ENCODE measurements at regions of chr6 and their contacts with region 1.

Region 1: DNA sequence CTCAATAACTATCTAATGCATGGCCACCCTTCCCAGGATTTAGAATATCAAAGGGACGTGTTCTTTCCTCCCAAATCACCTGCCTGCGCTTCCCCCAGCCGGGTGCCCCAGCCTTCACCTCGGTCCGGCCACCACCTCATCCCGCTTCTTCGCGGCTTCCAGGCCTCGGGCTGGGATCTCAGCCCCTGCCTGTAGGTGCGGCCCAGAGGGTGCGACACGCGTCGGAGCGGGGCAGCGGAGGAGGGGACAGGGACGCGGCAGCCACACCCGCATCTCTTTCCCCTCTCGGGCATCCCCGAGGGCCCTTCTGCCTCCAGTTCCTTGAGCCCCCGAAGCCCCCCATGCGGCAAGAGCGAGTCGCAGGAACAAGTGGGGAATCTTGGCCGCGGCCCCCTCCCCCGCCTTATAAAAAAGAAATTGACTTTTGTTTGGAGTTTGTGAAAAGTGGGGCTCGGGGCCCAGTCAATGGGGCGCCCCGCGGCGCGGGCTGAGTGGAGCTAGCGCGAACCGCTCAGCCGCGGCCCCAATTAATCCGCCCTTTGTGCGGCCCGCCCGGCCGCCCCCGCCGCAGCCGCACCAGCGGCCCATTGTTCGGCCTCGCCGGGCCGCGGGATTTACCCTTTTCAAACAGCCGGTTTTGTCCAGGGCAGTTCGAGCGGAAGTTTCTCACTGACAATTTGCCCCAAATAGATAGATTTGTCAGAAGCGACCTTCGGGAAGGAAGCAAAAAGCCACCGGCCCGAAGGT is 8.4 kb upstream of the NR2E1 start:
- DNase-seq: no peak
- H3K4me3 Mint-ChIP-seq: no peak overlapping the region
- H3K27ac Mint-ChIP-seq: peak overlapping the region; percentile 52
- H3K4me1 Mint-ChIP-seq: peaks cover 5% of the 10 kb centered on the region
- H3K27me3 Mint-ChIP-seq: peaks cover 90% of the 10 kb centered on the region

Region 2: DNA sequence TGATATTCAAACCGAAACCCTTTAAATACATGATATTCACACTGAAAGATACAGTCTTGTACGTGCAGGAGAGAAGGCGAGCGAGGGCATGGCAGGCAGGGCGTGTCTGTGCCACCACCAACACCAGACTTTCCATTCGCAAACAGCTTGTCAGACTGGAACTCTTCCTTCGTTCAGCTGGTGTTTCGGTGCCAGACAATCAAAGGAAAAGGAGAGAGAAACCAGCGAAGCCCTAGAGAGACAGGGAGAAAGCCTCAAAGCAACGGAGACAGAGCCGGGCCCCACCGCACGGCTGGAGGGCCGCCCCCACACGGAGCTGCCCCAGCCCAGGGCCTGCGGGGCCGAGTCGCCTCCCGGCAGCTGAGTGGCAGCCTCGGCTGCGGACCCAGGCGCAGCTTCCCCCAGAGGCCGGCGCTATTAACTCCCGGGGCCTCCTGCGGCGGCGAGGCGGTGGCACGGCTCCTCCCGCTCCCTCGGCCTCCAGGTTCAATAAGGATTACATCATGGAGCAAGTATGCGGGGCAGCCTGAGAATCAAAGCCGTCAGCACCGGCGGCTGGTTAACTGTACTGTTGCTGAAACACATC is 23.7 kb before region 1 on chr6:
- intact Hi-C with region 1: loop called (anchors 2 kb)
- DNase-seq: no peak
- H3K4me3 Mint-ChIP-seq: peak overlapping the region; percentile 77
- H3K27ac Mint-ChIP-seq: no peak overlapping the region
- H3K4me1 Mint-ChIP-seq: peaks cover 10% of the 10 kb centered on the region
- H3K27me3 Mint-ChIP-seq: peaks cover 79% of the 10 kb centered on the region

Region 3: GRCh38 chr6:108168501-108169463 is 11.4 kb after region 1 on chr6:
- intact Hi-C with region 1: loop called (anchors 2 kb)
- DNase-seq: no peak
- H3K4me3 Mint-ChIP-seq: no peak overlapping the region
- H3K27ac Mint-ChIP-seq: peak overlapping the region; percentile 40
- H3K4me1 Mint-ChIP-seq: peaks cover 14% of the 10 kb centered on the region
- H3K27me3 Mint-ChIP-seq: peaks cover 85% of the 10 kb centered on the region

Region 4: GRCh38 chr6:109373762-109374161 is 1216.4 kb after region 1 on chr6:
- intact Hi-C with region 1: no loop called
- DNase-seq: peak; percentile 46
- H3K4me3 Mint-ChIP-seq: peak overlapping the region; percentile 81
- H3K27ac Mint-ChIP-seq: peak overlapping the region; percentile 92
- H3K4me1 Mint-ChIP-seq: peaks cover 75% of the 10 kb centered on the region
- H3K27me3 Mint-ChIP-seq: no peaks in the 10 kb centered on the region